OCI-LY7 (cell line): ENCODE measurements at regions of chr6 and their contacts with region 1.

Region 1: DNA sequence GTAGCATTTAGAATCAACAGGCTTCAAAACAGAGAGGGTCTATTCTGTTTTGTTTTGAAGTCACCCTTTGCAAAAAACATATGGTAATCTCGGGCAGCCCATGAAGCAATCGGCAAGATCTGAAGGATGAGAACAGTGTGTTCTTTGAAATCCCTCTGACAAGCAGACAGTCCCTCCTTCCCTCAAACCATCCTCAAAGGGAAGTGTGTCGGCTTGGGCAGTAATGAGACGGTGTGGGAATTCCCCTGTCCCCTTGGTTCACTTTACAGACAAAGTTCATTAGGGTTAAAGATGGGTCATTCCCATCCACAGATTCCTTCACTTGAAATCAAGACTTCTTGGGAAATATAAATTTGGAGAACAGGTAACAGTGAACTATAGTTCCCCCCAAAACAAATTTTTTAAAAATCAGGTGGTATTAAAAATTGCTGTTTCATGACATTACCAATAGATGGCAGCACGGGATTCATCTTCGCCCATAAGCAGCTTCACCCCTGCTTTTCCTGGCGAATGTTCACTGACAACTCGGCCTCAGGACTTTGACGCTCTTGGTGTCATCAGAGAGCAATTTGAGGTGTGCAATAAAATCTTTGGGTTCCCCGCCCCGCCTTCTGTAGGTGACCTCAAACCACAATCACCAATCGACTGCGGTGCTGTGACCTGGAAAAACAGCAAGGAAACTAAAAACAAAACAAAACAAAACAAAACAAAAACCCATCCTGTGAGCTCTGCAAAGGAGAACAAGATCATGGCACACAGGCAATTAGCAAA is 159.3 kb upstream of the TNFAIP3 start:
- DNase-seq: peak; percentile 87
- H3K4me3 ChIP-seq: no peak overlapping the region
- H3K27ac ChIP-seq: no peak overlapping the region
- H3K4me1 ChIP-seq: peaks cover 35% of the 10 kb centered on the region
- CTCF ChIP-seq: peak; percentile 91

Region 2: GRCh38 chr6:137767911-137768690 is 60.3 kb after region 1 on chr6:
- CTCF ChIA-PET with region 1: no interaction called
- POLR2A ChIA-PET with region 1: no interaction called
- intact Hi-C with region 1: loop called (anchors 5 kb)
- DNase-seq: peak; percentile 42
- H3K4me3 ChIP-seq: no peak overlapping the region
- H3K27ac ChIP-seq: no peak overlapping the region
- H3K4me1 ChIP-seq: peaks cover 12% of the 10 kb centered on the region
- CTCF ChIP-seq: no peak

Region 3: GRCh38 chr6:137951064-137951597 is 243.4 kb after region 1 on chr6:
- CTCF ChIA-PET with region 1: interaction called, 4 read pairs
- POLR2A ChIA-PET with region 1: interaction called, 4 read pairs
- intact Hi-C with region 1: loop called (anchors 1 kb)
- DNase-seq: peak; percentile 89
- H3K4me3 ChIP-seq: peak overlapping the region; percentile 53
- H3K27ac ChIP-seq: peak overlapping the region; percentile 86
- H3K4me1 ChIP-seq: peaks cover 49% of the 10 kb centered on the region
- CTCF ChIP-seq: peak; percentile 69

Region 4: GRCh38 chr6:138001750-138002349 is 294.1 kb after region 1 on chr6:
- CTCF ChIA-PET with region 1: no interaction called
- POLR2A ChIA-PET with region 1: interaction called, 3 read pairs
- intact Hi-C with region 1: loop called (anchors 1 kb)
- DNase-seq: peak; percentile 57
- H3K4me3 ChIP-seq: no peak overlapping the region
- H3K27ac ChIP-seq: no peak overlapping the region
- H3K4me1 ChIP-seq: no peaks in the 10 kb centered on the region
- CTCF ChIP-seq: peak; percentile 99

Region 5: DNA sequence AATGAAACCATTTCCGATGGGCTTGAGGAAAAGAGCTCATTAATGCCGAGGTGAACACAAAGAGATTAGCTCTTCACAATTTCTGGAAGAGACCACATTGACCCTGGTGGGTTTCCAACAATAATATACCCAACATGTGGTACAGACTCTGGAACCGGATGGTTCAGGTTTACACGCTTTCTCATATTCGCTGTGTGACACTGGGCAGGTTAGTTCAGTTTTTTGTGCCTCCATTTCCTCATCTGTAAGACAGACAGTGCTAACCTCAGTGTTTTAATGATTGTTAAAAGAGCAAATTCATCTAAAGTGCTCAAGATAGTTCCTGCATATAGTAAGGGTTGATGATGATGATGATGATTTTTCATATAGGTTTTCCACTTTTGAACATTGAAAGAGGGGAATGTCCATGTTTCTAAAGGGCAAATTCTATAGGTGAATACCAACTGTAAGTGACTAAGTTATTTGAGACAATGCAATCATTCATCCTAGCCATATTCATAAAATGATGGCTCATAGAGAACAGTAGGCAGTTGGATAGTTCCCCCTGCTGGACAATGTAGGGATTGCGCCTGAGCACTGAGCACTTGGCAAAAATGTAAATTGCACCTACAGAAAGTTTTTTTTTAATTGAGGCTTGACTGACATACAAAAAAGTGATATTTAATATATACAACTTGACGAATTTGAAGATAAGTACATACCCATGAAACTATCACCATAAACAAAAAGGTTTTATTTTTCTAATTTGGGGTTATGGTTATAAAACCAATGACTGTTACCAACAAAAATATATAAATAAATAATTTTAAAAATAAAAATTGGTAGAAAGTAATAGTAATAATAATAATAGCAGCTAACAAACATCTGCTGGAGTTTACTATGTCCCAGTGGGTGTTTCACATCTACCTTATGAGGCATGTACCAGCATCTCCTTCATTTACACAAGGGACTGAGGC is 401.5 kb after region 1 on chr6:
- CTCF ChIA-PET with region 1: no interaction called
- POLR2A ChIA-PET with region 1: no interaction called
- intact Hi-C with region 1: loop called (anchors 2 kb)
- DNase-seq: peak; percentile 62
- H3K4me3 ChIP-seq: no peak overlapping the region
- H3K27ac ChIP-seq: no peak overlapping the region
- H3K4me1 ChIP-seq: no peaks in the 10 kb centered on the region
- CTCF ChIP-seq: peak; percentile 99